ENCODE measurements at regions of chr12 and their contacts with region 1.

Region 1: DNA sequence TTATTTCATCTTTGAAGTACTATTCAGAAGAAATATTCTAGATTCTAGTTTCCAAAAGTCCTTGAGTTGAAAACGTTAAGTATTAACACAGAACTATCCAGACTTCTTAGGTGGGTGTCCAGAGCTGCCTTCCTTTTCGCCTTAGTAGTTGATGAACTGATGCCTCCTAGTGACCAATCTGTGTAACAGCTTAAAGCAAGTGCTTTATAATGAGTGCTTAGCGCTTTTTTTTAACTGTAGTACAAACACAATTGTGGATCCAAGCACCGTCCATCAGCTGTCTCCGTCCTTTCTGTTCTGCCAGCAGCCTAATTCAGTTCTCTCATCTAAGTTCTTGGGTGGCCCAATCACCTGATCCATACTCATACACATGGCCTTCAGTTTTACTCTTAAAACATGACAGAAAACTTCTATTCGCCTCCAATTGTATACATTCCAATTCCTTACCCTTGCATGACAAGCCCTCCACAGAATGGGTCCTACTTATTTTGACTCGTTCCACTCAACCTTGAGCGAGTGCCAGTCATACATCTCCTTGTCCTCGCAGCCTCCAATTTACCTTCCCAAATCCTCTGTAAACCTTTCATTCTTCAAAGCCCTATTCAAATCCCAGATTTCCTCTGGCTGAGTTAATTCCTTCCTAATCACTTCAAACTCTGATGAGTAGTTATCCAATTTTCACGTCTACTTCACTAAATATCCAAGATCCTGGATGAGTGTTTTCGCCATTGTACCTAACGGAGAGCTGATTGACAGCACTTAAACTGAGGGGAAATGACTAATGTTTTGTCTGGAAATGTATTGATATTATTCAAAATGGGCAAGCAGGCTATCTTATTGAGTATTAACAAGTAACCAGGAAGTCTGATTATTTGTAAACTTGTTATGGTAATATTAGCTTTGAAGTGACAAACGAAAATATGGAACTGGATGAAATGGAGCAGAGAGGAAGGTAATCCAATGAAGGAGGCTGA is 5.8 kb upstream of the PHLDA1 start:
- DNase-seq: peak; percentile 51
- H3K4me3 ChIP-seq: no peak overlapping the region
- CTCF ChIP-seq: peak; percentile 57

Region 2: DNA sequence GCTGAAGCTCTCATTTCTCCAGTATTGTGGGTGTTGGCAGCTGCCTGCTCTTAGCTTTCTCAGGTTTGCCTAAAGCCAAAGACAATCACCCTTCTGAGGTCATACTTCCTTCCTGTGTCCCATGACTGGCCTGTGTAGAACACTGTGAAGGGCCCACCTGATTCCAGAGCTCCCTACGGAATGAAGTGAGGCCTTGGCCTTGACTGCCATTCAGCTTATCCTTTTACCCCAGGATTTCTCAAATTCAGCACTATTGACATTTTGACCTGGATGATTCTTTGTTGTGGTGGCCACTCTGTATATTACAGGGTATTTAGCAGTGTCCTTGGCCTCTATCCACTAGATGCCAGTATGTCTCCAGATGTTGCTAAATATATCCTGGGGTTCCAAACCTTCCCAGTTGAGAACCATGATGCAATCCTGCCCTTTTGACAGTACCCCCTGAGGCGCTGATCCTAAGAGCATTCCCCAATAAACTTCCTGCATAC is 413.7 kb before region 1 on chr12:
- CTCF ChIA-PET with region 1: interaction called, 11 read pairs
- POLR2A ChIA-PET with region 1: no interaction called
- DNase-seq: no peak
- H3K4me3 ChIP-seq: no peak overlapping the region
- CTCF ChIP-seq: peak; percentile 9

Region 3: GRCh38 chr12:75784591-75784990 is 252.8 kb before region 1 on chr12:
- CTCF ChIA-PET with region 1: no interaction called
- POLR2A ChIA-PET with region 1: no interaction called
- DNase-seq: no peak
- H3K4me3 ChIP-seq: no peak overlapping the region
- CTCF ChIP-seq: no peak

Region 4: DNA sequence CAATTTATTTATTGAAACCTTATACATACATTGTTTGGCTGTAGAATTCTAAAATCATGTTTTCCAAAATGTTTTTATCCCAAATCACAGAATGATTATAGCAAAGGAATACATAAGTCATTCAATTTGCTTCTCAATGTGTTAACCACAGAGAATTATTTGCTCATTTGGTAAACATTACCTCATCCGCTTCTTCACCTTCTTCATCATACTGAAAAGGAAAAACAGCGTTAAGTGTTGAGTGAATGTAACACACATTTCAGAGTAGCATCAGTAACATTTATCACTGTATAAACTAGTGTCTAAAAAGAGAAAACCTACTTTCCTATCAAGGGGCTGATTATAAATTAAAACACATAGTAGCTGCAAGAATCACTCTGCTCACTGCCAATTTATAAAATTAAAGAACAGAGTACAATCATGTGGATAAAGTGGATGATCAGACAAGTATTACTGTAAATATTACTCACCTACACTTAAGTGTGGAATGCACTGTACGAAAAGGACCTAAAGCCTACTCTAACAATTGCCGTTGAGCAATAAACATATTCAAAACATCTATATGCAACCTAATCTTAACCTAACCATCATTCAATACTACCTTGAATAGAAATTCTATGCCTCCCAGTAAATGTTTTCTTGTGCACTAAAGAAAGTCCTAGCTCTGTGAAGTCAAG is 12.3 kb after region 1 on chr12:
- CTCF ChIA-PET with region 1: interaction called, 15 read pairs
- POLR2A ChIA-PET with region 1: interaction called, 5 read pairs
- DNase-seq: no peak
- H3K4me3 ChIP-seq: no peak overlapping the region
- CTCF ChIP-seq: no peak